MCF 10A (cell line): ENCODE measurements at regions of chr1 and their contacts with region 1.

Region 1: DNA sequence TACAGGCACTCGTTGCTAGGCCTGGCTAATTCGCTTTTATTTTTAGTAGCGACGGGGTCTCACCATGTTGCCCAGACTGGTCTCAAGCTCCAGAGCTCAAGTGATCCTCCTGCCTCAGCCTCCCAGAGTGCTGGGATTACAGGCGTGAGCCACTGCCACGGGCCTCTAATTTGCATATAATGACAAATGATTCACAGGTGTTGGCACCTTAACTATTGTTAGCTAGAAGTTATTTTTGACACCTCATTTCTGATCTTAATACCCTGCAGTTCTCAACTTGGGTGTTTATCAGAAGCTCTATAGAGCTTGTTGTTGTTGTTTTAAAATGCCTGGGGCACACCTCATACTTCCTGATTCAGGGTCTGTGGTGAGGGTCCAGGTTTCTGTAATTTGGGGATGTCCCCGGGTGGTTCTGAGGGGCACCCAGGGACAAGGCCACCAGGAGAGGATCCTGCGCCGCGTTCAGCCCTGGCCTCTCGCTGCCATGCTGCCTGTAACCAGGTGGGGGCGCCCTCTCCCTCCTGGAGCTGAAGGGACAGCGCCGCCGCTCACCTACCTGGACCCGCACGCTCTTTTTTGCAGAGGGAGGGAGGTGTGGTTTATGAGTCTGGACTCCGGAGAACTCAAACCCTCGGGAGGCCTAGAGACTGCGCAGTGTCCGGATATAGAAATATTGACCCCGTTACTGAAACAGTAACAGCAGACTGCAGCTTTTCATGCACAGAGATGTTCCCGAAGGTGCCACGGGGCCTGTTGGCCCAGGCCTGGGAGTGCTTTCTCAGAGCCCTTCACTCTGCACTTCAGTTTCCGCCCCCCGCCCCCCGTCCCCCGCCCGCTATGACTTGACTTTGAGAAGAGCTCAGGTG is 23.0 kb upstream of the NEK2 start:
- DNase-seq: peak; percentile 93
- H3K4me3 Mint-ChIP-seq: no peak overlapping the region
- H3K27ac Mint-ChIP-seq: no peak overlapping the region
- H3K4me1 Mint-ChIP-seq: no peaks in the 10 kb centered on the region
- H3K27me3 Mint-ChIP-seq: no peaks in the 10 kb centered on the region
- CTCF ChIP-seq: peak; percentile 100

Region 2: DNA sequence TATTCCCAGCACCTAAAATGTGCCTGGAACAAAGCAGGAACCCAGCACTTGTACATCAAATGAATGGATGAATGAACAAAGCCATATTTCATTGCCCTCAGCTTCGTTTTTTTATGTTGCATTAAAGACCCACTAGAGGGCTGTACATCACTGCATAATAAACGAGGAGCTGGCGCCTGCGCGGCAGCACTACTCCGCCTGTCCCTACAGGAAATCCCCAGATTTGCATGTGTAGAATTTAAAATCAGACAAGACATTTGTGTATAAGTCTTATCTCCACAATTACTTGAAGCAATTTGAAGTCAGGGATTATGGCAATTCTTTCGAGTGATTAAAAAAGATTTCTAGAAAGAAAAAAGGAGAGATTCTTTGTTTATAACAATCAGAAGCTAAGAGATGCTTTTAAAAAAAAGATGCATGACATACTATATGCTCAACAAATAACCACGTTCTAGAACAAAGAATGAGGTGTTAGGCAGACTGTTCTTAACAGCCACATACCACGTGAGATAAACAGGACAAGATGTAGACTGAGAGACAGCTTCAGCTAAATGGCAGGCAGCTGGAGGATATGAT is 17.6 kb before region 1 on chr1:
- CTCF ChIA-PET with region 1: interaction called, 174 read pairs
- POLR2A ChIA-PET with region 1: interaction called, 6 read pairs
- intact Hi-C with region 1: no loop called
- DNase-seq: peak; percentile 92
- H3K4me3 Mint-ChIP-seq: no peak overlapping the region
- H3K27ac Mint-ChIP-seq: peak overlapping the region; percentile 24
- H3K4me1 Mint-ChIP-seq: peaks cover 8% of the 10 kb centered on the region
- H3K27me3 Mint-ChIP-seq: no peaks in the 10 kb centered on the region
- CTCF ChIP-seq: peak; percentile 99

Region 3: GRCh38 chr1:211750599-211750998 is 52.2 kb after region 1 on chr1:
- CTCF ChIA-PET with region 1: interaction called, 20 read pairs
- POLR2A ChIA-PET with region 1: no interaction called
- intact Hi-C with region 1: no loop called
- DNase-seq: no peak
- H3K4me3 Mint-ChIP-seq: no peak overlapping the region
- H3K27ac Mint-ChIP-seq: no peak overlapping the region
- H3K4me1 Mint-ChIP-seq: no peaks in the 10 kb centered on the region
- H3K27me3 Mint-ChIP-seq: no peaks in the 10 kb centered on the region
- CTCF ChIP-seq: no peak

Region 4: GRCh38 chr1:211830330-211831142 is 132.1 kb after region 1 on chr1 and contains the start of gene LPGAT1:
- CTCF ChIA-PET with region 1: interaction called, 286 read pairs
- POLR2A ChIA-PET with region 1: interaction called, 15 read pairs
- intact Hi-C with region 1: loop called (anchors 1 kb)
- DNase-seq: peak; percentile 87
- H3K4me3 Mint-ChIP-seq: peak within 1 kb of the TSS; percentile 95
- H3K27ac Mint-ChIP-seq: peak within 1 kb of the TSS; percentile 92
- H3K4me1 Mint-ChIP-seq: peaks cover 33% of the 10 kb centered on the region
- H3K27me3 Mint-ChIP-seq: no peaks in the 10 kb centered on the region
- CTCF ChIP-seq: peak; percentile 91
- total RNA-seq, gene LPGAT1: 76.2 and 82.4 TPM in 2 replicates

Region 5: DNA sequence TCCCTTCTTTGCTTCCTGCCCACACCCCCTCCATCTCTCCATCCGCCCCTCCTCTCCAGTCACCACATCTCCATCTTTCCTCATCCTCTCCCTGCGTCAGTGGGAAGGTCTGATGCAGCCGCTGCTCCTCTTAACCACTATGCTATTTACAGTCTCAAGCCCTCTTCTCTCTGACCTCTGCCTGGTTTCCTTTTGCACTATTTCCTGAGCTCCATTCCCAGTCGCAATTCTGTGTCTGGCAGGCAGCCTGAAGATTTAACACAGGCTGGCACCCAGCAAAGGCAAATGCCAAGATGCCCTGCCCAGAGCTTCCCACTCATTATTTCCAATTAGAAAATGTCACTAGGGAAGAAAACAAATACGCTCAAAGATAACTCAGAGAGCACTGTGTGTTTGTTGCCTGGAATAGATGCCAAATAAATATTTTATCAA is 221.8 kb after region 1 on chr1:
- CTCF ChIA-PET with region 1: interaction called, 15 read pairs
- POLR2A ChIA-PET with region 1: interaction called, 6 read pairs
- intact Hi-C with region 1: no loop called
- DNase-seq: peak; percentile 63
- H3K4me3 Mint-ChIP-seq: no peak overlapping the region
- H3K27ac Mint-ChIP-seq: no peak overlapping the region
- H3K4me1 Mint-ChIP-seq: peaks cover 28% of the 10 kb centered on the region
- H3K27me3 Mint-ChIP-seq: peaks cover 6% of the 10 kb centered on the region
- CTCF ChIP-seq: no peak

Region 6: DNA sequence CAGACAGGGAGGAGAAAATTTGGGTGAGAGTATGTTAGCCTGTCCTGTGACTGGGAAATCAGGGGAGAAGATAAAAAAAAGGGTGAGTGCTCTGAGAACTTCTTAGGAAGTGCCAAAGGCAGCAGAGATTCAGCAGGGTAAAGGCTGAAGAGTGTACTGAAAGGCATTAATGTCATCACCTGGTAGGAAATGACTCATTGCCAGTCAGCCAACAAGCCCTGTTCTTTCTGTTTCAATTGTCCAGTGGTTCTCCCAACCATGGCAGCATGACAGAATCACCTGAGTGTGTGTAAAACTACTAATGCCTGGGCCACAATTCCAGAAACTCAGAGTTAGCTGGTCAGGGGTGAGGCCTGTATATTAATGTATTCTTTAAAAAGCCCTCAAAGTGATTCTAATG is 253.5 kb after region 1 on chr1:
- CTCF ChIA-PET with region 1: interaction called, 41 read pairs
- POLR2A ChIA-PET with region 1: interaction called, 7 read pairs
- intact Hi-C with region 1: no loop called
- DNase-seq: peak; percentile 98
- H3K4me3 Mint-ChIP-seq: no peak overlapping the region
- H3K27ac Mint-ChIP-seq: no peak overlapping the region
- H3K4me1 Mint-ChIP-seq: peaks cover 17% of the 10 kb centered on the region
- H3K27me3 Mint-ChIP-seq: no peaks in the 10 kb centered on the region
- CTCF ChIP-seq: no peak

Region 7: GRCh38 chr1:212012034-212012740 is 313.8 kb after region 1 on chr1:
- CTCF ChIA-PET with region 1: interaction called, 20 read pairs
- POLR2A ChIA-PET with region 1: no interaction called
- intact Hi-C with region 1: loop called (anchors 1 kb)
- DNase-seq: peak; percentile 95
- H3K4me3 Mint-ChIP-seq: no peak overlapping the region
- H3K27ac Mint-ChIP-seq: no peak overlapping the region
- H3K4me1 Mint-ChIP-seq: no peaks in the 10 kb centered on the region
- H3K27me3 Mint-ChIP-seq: no peaks in the 10 kb centered on the region
- CTCF ChIP-seq: peak; percentile 100